Activated CD4-positive, alpha-beta T cell treated with anti-CD3 and anti-CD28 coated beads for 36 hours (primary cell): ENCODE measurements at regions of chr15 and their contacts with region 1.

Region 1: GRCh38 chr15:99704444-99704838 is 28.8 kb downstream of the LYSMD4 start:
- DNase-seq: no peak
- ATAC-seq: peak; percentile 69
- H3K4me3 Mint-ChIP-seq: no peak overlapping the region
- H3K27ac Mint-ChIP-seq: no peak overlapping the region
- H3K4me1 Mint-ChIP-seq: peaks cover 48% of the 10 kb centered on the region
- H3K27me3 Mint-ChIP-seq: no peaks in the 10 kb centered on the region

Region 2: DNA sequence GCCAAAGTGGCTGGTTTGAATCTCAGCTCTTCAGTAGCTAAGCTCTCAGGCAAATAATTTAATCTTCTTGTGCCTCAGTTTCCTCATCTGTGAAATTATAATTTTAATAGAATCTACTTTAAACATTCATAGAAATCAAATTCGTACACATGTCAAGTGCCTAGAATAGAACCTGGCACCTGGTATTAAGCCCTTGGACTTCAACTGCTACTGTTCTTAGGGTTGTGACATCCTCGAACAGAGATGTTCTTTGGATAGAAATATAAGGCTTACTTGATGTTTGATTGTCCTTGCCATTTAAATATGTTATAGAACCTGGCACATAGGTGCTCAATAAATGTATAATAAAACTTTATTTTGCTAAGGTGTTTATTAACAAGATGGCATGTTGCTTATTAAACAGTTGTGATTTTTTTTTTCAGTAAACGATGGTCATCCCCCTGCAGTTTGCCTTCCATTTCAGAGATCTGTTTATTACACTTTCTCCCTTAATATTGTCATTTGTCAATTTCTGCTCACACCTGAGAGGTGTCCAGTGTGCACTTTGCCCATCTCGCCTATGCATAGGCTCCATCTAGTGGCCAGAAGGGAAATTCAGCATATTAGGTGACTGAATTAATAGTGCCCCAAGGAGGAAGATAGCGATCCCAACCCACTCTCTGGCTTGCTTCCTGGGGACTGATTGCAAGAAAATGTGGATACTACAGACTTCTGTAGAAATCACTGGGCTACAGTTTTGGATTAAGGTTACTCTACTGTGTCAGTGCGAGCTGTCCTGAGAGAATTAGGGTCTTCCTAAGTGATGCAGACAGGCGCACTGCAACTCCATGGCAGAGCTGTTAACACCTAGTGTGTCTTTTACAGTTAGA is 1045.4 kb before region 1 on chr15:
- CTCF ChIA-PET with region 1: no interaction called
- POLR2A ChIA-PET with region 1: no interaction called
- intact Hi-C with region 1: no loop called
- DNase-seq: peak; percentile 40
- ATAC-seq: peak; percentile 81
- H3K4me3 Mint-ChIP-seq: no peak overlapping the region
- H3K27ac Mint-ChIP-seq: no peak overlapping the region
- H3K4me1 Mint-ChIP-seq: peaks cover 41% of the 10 kb centered on the region
- H3K27me3 Mint-ChIP-seq: no peaks in the 10 kb centered on the region

Region 3: DNA sequence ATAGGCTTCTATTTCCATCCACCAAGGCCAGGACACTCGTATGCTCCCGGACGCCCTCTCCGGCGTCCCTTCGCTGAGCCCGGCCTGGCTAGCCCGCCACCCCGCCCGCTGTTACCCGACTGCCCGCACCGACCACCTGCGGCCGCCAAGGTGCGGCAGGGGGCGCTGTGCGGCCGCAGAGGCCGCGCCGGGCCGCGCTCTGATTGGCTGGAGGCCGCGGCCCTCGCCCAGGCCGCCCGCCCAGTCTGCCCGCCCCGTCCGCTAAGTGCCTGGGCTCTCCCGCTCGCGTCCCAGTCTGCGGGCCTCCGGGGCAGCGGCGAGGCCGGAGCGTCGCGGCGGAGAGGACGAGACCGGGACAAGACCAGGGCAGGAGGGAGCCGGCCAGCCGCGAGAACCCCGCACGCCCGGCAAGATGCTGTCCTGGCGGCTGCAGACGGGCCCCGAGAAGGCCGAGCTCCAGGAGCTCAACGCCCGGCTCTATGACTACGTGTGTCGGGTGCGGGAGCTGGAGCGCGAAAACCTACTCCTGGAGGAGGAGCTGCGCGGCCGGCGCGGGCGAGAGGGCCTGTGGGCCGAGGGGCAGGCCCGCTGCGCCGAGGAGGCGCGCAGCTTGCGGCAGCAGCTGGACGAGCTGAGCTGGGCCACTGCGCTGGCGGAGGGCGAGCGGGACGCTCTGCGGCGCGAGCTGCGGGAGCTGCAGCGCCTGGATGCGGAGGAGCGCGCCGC is 599.5 kb before region 1 on chr15 and contains the start of gene SYNM:
- CTCF ChIA-PET with region 1: interaction called, 6 read pairs
- POLR2A ChIA-PET with region 1: no interaction called
- intact Hi-C with region 1: loop called in 1 of 2 experiments (anchors 2 kb)
- DNase-seq: peak; percentile 64
- ATAC-seq: peak; percentile 63
- H3K4me3 Mint-ChIP-seq: peak within 1 kb of the TSS; percentile 51
- H3K27ac Mint-ChIP-seq: no peak within 1 kb of the TSS
- H3K4me1 Mint-ChIP-seq: no peaks in the 10 kb centered on the region
- H3K27me3 Mint-ChIP-seq: peaks cover 39% of the 10 kb centered on the region
- total RNA-seq, gene SYNM: 0.09 to 0.14 TPM

Region 4: GRCh38 chr15:99275525-99276128 is 428.8 kb before region 1 on chr15:
- CTCF ChIA-PET with region 1: interaction called, 124 read pairs
- POLR2A ChIA-PET with region 1: interaction called, 5 read pairs
- intact Hi-C with region 1: loop called (anchors 1 kb)
- DNase-seq: no peak
- ATAC-seq: no peak
- H3K4me3 Mint-ChIP-seq: no peak overlapping the region
- H3K27ac Mint-ChIP-seq: no peak overlapping the region
- H3K4me1 Mint-ChIP-seq: peaks cover 23% of the 10 kb centered on the region
- H3K27me3 Mint-ChIP-seq: no peaks in the 10 kb centered on the region

Region 5: DNA sequence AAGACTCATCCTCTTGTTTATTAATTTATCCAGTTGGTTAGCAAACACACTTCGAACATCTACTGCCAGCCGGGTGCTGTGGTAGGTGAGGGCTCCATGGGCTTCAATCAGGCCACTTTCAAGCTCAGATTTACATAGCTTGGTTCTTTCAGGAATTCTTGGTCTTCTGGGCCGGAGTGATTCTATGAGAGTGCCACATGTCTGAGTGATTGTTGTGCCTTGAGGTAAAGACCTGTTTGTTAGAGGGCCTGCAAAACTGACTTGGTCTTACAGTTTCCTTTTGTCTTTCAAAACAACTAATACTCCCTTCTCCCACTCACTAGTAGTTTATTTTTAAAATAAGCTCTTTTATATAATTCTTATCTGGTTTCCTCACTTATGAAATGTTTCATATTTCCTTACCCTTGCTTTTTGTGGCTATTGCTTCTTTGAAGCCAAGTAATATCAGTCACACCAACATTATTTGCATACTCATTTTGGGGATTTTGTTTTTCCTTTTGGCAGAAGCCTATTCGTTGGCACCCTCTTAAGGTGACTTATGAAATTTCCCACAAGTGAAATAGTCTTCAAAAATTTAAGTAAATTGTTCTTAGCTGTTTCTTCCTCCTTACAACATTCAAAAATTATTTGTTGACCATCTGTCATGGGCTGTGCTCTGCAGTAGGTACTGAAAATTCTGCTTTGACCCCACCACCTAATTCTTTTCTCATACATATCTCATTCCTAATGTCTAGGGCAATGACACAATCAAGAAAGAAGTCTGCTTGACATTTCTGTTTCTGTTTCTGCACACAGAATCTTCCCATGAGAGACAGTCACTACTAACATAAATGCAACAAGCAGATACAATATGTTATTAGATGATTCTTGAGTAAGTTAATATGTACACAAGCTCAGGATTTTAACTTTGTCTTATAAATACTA is 333.0 kb before region 1 on chr15:
- CTCF ChIA-PET with region 1: interaction called, 12 read pairs
- POLR2A ChIA-PET with region 1: no interaction called
- intact Hi-C with region 1: no loop called
- DNase-seq: no peak
- ATAC-seq: peak; percentile 95
- H3K4me3 Mint-ChIP-seq: no peak overlapping the region
- H3K27ac Mint-ChIP-seq: peak overlapping the region; percentile 55
- H3K4me1 Mint-ChIP-seq: peaks cover 21% of the 10 kb centered on the region
- H3K27me3 Mint-ChIP-seq: no peaks in the 10 kb centered on the region

Region 6: DNA sequence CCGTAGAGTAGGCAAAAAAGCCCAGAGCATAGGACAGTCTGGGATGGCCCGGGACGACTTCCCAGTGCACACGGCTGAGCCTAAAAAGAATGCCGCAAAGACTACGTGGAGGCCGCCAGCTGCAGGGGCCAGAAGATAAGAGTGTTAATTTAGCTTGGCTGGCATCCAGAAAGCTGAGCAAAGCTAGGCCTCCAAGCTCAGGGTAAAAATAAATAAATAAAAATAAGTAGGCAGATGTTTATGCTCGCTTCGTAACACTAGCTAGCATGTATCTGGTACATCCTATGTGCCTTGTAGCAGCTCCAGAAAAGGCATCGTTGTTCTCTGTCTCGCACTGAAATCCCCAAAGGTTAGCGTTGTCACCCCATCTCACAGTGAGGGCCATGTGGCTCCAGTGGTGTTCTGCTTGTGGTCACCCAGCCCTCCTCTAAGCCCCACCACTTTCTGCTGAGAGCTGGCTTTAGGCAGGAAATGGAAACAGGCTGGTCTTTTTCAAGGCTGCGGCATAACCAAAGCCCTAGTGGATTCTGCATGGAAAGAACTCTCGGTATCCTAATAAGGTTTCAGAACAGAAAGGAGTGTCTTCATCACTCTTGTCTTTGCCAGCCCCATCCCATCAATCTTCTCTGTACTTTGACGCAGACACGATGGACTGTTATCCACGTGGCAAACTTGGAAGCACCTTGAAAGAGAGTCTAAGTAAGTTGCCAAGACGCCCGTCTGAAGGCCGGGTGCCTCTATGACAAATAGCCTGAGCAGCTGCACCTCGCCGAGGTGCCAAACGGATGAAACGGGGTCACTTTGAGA is 196.7 kb before region 1 on chr15:
- CTCF ChIA-PET with region 1: interaction called, 6 read pairs
- POLR2A ChIA-PET with region 1: no interaction called
- intact Hi-C with region 1: loop called (anchors 5 to 10 kb)
- DNase-seq: no peak
- ATAC-seq: no peak
- H3K4me3 Mint-ChIP-seq: no peak overlapping the region
- H3K27ac Mint-ChIP-seq: no peak overlapping the region
- H3K4me1 Mint-ChIP-seq: peaks cover 32% of the 10 kb centered on the region
- H3K27me3 Mint-ChIP-seq: no peaks in the 10 kb centered on the region

Region 7: GRCh38 chr15:99733268-99734039 is 29.0 kb after region 1 on chr15 and contains the start of gene LYSMD4:
- CTCF ChIA-PET with region 1: interaction called, 15 read pairs
- POLR2A ChIA-PET with region 1: interaction called, 5 read pairs
- intact Hi-C with region 1: loop called (anchors 1 kb)
- DNase-seq: peak; percentile 100
- ATAC-seq: peak; percentile 99
- H3K4me3 Mint-ChIP-seq: peak within 1 kb of the TSS; percentile 71
- H3K27ac Mint-ChIP-seq: peak within 1 kb of the TSS; percentile 91
- H3K4me1 Mint-ChIP-seq: peaks cover 23% of the 10 kb centered on the region
- H3K27me3 Mint-ChIP-seq: no peaks in the 10 kb centered on the region
- total RNA-seq, gene LYSMD4: 4.7 to 5.3 TPM

Region 8: DNA sequence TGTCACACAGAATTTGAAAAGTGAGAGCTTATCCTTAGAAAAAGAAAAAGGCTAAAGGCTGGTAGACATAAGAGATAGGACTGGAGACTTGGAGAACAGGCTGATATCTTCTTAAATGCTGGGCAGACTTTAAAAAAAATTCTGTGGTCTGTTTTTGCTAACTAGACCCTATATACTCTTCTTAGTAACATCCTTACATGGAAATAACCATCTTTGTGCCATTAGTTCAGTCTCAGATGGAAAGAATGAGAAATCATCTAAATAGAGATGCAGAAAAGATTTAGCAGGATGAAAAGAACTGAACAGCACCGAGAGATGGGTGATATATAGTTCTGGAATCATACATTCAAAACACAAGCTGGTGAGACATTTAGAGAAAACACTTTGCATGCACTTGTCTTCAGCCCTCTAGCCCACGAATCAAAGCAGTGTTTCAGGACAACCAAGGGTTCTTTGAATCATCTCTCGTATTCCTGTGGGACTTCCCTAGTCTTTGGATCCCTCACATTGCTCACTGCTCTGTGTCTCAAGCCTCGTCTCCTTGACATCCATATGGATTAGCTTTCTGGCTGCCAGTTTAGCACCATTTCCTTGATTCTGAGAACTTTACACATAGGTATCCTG is 121.8 kb after region 1 on chr15:
- CTCF ChIA-PET with region 1: no interaction called
- POLR2A ChIA-PET with region 1: no interaction called
- intact Hi-C with region 1: no loop called
- DNase-seq: peak; percentile 31
- ATAC-seq: peak; percentile 93
- H3K4me3 Mint-ChIP-seq: peak overlapping the region; percentile 11
- H3K27ac Mint-ChIP-seq: peak overlapping the region; percentile 98
- H3K4me1 Mint-ChIP-seq: peaks cover 37% of the 10 kb centered on the region
- H3K27me3 Mint-ChIP-seq: no peaks in the 10 kb centered on the region